Activated B cell treated with CpG ODN at 0.5 μM for 24 hours (primary cell): ENCODE measurements at regions of chr18 and their contacts with region 1.

Region 1: DNA sequence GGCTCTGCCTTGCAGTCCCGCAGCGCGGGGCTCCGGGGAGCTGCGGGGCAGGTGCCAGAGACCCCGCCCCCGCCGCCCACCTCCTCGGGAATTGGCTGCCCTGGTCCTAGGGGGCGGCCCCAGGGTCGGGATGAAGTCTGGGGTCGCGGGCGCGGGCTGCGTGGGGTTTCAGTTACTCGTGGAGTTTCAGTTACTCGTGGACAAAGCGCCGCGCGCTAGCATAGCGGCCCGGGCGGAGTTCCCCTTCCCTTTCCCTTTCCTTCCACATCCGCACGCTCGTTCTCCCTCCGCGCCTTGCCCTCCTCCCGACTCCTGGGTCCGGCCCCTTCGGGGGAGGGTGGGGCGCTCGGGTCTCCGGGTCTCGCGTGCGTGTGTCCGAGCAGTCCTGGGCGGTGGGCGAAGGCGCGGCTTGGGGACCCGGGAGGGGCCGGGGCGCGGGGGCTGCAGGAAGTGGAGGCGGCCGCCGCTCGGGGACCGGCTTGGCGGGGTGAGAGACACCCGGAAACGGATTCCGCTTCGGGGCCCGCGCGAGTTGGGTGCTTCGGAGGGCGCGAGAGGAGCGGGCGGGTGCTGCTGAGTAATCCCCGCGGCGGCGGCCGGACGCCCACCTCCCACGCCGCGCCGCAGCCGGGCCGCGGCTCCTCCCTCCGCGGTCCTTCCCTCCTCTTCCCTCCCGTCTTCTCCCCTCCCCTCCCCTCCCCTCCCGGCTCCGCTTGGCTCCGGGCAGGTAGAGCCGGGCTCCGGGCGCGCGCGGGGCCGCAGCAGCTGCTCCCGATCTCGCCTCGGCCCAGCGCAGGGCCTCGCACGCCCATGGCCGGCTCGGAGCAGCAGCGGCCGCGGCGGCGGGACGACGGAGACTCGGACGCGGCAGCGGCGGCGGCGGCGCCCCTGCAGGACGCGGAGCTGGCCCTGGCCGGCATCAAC is at the start of gene TTC39C:
- DNase-seq: peak; percentile 76
- ATAC-seq: peak; percentile 66
- H3K4me3 Mint-ChIP-seq: peak within 1 kb of the TSS; percentile 89
- H3K27ac Mint-ChIP-seq: peak within 1 kb of the TSS; percentile 83
- H3K4me1 Mint-ChIP-seq: peaks cover 84% of the 10 kb centered on the region
- H3K27me3 Mint-ChIP-seq: no peaks in the 10 kb centered on the region
- CTCF ChIP-seq: no peak
- total RNA-seq, gene TTC39C: 60.6 and 68.4 TPM in 2 replicates

Region 2: DNA sequence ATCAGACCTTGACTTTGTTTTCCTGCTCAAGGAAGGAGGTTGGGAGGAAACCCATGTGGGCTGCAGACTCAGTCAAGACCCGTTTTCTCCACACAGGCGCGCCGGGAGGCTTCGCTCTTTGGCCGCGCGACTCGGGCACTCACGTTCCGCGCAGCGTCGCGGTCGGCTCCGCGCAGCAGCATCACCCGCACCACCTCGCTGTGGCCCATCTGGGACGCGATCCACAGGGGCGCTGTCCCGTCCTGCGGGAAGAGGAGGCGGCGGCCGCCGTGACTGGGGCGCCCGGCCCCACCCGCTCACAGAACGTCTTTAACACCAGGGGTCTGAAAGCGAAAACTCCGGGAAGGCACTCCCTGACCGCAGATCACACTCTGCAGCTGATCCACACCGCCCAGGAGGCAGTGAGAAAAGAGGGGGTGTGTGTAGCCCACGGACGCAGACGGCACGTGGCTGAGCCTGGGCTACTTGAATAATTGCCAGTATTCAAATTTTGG is 394.9 kb before region 1 on chr18:
- CTCF ChIA-PET with region 1: no interaction called
- POLR2A ChIA-PET with region 1: no interaction called
- intact Hi-C with region 1: loop called (anchors 5 kb)
- DNase-seq: peak; percentile 18
- ATAC-seq: peak; percentile 36
- H3K4me3 Mint-ChIP-seq: peak overlapping the region; percentile 63
- H3K27ac Mint-ChIP-seq: no peak overlapping the region
- H3K4me1 Mint-ChIP-seq: peaks cover 17% of the 10 kb centered on the region
- H3K27me3 Mint-ChIP-seq: peaks cover 34% of the 10 kb centered on the region
- CTCF ChIP-seq: no peak

Region 3: DNA sequence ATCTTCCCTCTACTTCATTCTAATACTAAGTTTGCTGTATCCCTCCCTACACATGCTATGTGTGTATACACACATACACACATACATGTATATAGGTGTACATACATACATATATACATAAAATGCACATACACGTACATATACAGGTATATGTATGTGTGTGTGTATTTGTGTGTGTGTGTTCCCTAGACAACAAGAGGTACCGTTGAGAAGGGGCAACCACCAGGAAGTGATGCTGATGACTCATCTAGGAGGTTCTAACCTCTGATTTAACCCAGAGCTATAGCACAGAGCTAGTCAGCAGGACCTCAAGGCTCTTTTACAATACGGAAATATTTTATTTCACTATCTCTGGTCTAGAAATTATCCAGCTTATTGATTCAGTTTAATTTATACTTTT is 185.9 kb before region 1 on chr18:
- CTCF ChIA-PET with region 1: no interaction called
- POLR2A ChIA-PET with region 1: no interaction called
- intact Hi-C with region 1: loop called (anchors 5 kb)
- DNase-seq: no peak
- ATAC-seq: peak; percentile 95
- H3K4me3 Mint-ChIP-seq: no peak overlapping the region
- H3K27ac Mint-ChIP-seq: no peak overlapping the region
- H3K4me1 Mint-ChIP-seq: no peaks in the 10 kb centered on the region
- H3K27me3 Mint-ChIP-seq: peaks cover under 1% of the 10 kb centered on the region
- CTCF ChIP-seq: no peak

Region 4: GRCh38 chr18:23967321-23968089 is 46.8 kb before region 1 on chr18:
- CTCF ChIA-PET with region 1: interaction called, 3 read pairs
- POLR2A ChIA-PET with region 1: interaction called, 19 read pairs
- intact Hi-C with region 1: loop called (anchors 2 kb)
- DNase-seq: peak; percentile 28
- ATAC-seq: peak; percentile 55
- H3K4me3 Mint-ChIP-seq: peak overlapping the region; percentile 62
- H3K27ac Mint-ChIP-seq: peak overlapping the region; percentile 79
- H3K4me1 Mint-ChIP-seq: peaks cover 83% of the 10 kb centered on the region
- H3K27me3 Mint-ChIP-seq: no peaks in the 10 kb centered on the region
- CTCF ChIP-seq: no peak

Region 5: DNA sequence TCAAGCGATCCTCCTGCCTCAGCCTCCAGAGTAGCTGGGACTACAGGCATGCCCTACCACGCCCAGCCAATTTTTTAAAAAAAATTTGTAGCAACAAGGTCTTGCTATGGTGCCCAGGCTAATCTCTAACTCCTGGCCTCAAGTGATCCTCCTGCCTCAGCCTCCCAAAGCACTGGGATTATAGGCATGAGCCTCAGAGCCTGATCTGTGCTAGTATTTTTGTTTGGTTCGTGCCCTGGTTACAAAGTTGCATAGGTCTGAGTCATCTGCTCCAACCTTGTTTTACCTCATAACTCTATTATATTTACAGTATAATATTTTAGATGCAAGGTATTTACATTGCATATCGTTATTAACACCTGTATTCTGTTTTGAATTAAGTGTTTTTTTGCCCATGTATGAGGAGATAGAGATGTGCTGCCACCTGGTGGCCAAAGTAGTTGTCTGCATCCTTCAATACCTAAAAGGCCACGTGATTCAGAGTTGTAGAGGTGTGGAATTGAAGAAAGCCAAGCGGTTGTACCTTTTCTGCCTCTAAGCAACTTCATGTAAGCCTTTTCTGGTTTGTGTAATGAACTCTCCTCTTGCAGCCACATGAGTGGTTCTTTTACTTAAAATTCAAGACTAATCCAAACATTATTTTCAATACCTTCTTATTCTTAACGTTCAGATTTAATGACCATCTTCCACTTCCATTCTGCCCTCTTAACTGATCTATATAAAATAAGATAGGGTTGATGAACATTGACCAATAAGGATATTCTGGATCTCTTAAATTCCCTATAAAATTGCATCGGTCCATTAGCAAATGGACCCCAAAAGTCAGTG is 104.6 kb after region 1 on chr18:
- CTCF ChIA-PET with region 1: no interaction called
- POLR2A ChIA-PET with region 1: no interaction called
- intact Hi-C with region 1: loop called (anchors 1 kb)
- DNase-seq: peak; percentile 40
- ATAC-seq: peak; percentile 77
- H3K4me3 Mint-ChIP-seq: no peak overlapping the region
- H3K27ac Mint-ChIP-seq: no peak overlapping the region
- H3K4me1 Mint-ChIP-seq: peaks cover 9% of the 10 kb centered on the region
- H3K27me3 Mint-ChIP-seq: no peaks in the 10 kb centered on the region
- CTCF ChIP-seq: no peak